ENCODE measurements at regions of chr3 and their contacts with region 1.

Region 1: DNA sequence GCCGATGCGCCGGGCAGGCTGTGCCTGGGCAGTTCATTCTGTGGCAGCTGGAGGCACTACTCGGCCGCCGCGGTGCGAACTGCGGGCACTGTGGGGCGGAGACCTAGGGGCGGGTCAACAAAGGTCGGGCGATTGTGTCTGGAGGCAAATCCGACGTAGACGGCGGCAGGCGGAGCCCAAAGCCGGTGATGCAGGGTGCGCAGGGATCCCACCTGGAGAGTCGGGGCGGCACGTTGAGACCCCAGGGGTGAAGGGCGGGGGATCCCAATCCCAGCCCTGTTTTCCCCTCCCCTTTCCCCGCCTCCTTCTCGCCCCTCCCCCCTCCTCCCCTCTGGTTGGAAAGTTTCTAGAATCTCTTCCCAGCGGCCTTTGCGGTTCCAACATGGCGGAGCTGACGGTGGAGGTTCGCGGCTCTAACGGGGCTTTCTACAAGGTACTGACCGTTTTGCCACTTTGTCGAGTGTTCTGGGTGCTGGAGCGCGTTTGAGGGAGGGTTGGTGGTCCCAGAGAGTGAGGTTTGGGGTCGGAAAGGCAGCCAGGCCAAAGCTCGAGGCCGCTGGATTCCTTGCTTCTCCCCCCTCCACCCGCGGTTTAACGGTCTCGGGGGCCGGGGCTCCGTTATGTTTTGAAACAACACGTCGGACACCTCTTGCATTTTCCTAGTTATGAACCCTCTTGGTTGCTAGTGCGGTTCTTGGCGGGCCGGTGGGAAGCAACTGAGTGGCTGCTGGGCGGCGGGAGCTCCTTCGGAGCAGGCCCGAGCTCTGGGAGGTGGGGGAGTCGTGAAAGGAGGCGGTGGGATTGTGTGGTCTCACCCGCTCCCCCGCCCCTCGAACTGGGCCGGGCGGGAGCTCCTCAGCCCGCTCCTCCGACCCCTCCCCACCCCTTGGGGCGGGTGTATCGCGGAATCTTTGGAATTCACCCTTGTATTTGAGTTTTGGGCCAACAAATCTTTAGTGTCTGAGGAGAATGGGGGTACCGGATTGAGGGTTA is at the start of gene FXR1:
- DNase-seq: peak; percentile 73 to 92
- H3K4me3 ChIP-seq: peak within 1 kb of the TSS; percentile 61 to 84
- H3K27ac ChIP-seq: peak within 1 kb of the TSS; percentile 82 to 92
- H3K4me1 ChIP-seq: peaks cover 0 to 18% of the 10 kb centered on the region in 2 donors
- H3K27me3 ChIP-seq: no peaks in the 10 kb centered on the region
- CTCF ChIP-seq: peak; percentile 75 to 91 (median 89)
- total RNA-seq, gene FXR1: 9.6 TPM

Region 2: GRCh38 chr3:180870008-180870699 is 42.4 kb before region 1 on chr3:
- intact Hi-C with region 1: loop called (anchors 2 kb)
- DNase-seq: peak in 1 of 2 donors; percentile 72
- H3K4me3 ChIP-seq: peak overlapping the region; percentile 45 to 51
- H3K27ac ChIP-seq: peak overlapping the region; percentile 54 to 72
- H3K4me1 ChIP-seq: peaks cover 0 to 13% of the 10 kb centered on the region in 2 donors
- H3K27me3 ChIP-seq: no peaks in the 10 kb centered on the region
- CTCF ChIP-seq: peak in 1 of 3 experiments; percentile 15